Head of caudate nucleus (tissue), 42 donors: ENCODE measurements at regions of chr11 and their contacts with region 1.

Region 1: DNA sequence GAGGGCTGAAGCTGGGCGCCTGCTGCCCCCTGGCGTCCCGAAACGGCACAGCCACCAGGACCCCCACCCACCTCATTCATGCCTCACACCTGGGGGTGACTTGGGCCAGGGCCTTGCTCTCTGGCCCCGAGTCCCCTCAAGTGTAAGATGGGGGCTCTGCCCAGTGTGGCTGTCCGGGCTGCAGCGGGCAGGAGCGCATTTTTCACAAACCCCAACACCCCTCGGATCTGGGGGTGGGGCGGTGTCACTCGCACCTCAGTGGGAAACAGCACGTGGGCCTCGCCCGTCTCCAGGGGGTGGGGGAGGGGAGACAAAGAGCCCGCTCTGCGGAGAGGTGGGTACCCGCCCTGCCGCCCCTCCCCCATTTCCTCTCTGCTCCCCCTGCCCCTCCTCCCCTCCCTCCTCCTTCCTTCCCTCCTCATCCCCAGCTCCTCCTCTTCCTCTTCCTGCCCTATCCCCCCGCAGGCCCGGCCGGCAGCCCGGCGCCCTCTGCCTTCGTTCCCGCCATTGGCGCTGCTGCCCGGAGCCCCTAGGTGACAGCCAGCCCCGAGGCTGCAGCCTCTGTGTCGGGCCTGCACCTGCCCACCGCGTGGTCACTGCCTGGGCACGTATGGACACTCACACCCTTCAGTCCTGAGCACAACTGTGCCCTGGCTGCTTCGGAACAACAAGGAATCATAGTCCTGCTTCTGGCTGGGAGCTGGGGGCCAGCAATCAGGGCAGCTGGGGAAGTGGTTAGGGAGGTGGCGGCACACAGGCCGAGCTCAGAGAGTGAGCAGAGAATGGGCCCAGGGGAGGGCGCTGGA is 6.8 kb upstream of the CDKN1C start:
- DNase-seq: peak in 35 of 42 donors; percentile 16 to 77 (median 58)

Region 2: DNA sequence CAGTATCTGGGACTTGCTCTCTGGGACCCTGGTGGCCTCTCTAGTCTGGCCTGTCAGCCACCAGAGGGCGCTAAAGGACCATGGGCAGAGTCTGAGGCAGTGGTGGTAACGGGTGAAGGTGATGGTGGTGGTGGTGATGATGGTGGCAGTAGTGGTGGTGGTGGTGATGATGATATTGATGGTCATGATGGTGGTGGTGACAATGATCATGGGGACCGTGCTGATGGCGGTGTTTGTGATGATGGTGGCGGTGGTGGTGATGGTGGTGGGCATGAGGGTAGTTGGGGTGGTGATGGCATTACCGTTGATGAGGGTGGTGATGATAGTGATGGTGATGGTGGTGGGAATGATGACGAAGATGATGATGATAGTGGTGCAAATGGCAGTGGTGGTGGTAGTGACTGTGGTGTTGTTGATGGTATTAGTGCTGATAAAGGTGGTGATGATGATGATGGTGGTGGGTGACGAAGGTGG is 464.1 kb before region 1 on chr11:
- intact Hi-C with region 1: loop called (anchors 5 kb)
- DNase-seq: peak; percentile 32 to 88 (median 71)